ENCODE measurements at regions of chr20 and their contacts with region 1.

Region 1: DNA sequence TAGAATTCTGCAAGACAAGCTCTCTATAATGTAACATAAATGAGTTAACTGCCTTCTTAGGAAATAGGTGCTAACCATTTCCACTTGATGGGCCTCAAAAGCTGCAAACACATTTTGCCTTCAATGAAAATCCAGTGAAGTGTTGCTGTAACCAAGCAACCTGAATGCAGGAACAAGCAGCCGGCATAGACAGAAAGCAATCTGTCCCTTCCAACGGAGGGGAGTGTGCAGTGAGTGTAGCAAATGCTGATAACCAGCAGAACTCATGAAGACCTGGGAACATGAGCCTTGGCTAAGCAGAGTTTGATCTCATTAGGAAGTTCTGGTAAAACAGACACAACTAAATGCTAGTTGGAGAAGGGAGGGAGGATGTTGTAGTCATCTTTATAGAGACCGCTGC is 697.8 kb downstream of the KIF16B start:
- DNase-seq: no peak
- H3K4me3 ChIP-seq: no peak overlapping the region
- CTCF ChIP-seq: no peak
- POLR2A ChIP-seq: no peak

Region 2: DNA sequence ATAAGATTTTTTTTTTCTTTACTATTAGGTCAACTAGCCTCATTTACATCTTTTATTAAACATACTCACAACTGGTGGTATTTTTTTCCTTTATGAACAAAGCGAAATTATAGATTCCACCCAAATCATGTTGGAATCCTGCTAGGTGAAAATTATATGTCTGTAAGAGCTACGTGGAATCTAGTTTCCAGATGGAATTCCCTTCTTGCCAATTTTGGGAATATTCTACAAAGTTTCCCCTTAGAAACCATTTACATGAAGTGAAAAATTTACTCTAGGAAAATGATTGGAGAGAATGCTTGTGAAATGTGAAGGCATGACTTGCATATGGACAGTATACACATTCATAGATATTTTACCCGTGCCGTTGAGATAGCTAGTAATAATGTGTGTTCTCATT is 413.5 kb before region 1 on chr20:
- intact Hi-C with region 1: no loop called
- DNase-seq: no peak
- H3K4me3 ChIP-seq: no peak overlapping the region
- CTCF ChIP-seq: no peak
- POLR2A ChIP-seq: no peak

Region 3: DNA sequence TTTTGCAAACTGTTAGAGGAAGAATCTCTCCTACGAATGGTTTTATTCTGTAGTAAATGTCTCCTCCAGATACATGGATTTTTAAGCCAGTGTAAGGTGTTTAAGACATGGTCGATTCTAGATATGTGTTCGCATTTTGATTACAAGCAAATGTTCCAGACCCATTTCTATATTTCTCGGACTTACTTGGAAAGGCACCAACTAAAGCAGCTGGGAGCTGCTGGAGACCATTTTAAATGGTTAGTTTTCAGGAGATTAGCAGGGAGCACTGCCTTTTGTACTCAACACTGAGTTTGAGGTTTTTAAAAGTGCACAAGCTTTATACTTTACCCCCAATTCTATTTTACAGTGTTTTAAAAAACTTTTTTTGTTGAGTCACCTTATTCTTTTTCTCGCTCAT is 159.2 kb before region 1 on chr20:
- intact Hi-C with region 1: no loop called
- DNase-seq: no peak
- H3K4me3 ChIP-seq: no peak overlapping the region
- CTCF ChIP-seq: no peak
- POLR2A ChIP-seq: no peak

Region 4: DNA sequence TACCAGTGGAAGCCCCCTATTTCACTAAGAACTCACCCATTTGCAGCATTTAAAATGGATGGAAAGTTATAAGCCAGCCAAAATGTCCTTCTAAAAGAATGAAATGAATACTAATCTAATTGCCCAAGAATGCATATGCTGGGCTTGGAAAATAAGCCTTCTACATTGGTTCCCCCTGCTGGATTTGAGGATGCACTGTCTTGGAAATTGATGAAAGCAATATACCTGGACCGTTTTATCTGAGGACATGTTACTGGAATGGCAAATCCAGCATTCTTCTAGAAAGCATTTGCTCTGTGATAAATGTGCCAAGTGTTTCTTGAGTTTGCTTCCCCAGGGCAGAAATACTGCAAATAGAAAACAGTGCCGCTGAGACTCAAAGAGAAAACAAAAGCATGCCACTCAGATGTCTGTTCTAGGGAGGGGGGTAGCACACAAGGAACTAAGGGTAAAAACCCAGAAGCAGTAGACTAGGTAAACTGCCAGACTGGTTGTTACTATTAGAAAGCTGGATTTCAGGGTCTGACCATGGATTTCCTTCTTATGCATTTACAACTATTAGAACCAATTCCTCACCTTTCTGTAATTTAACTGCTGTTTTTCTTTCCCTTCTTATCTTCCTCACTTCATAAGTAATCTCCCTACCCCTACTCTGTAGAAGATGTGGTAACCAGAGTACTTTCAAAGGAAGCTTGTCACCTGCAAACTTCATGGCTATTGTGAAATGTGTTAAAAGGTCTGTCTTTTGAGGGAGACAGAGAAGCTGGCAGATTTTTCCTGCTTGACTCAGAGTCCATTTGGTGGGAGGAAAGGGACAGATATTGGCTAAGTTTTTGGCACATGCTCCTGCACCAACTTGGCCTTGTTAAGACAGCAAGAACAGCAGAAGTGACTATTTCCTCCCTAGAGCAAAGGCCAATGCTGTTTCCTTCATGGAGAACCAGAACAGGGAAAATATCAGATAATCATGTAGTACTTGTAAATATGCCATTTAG is 55.2 kb after region 1 on chr20:
- intact Hi-C with region 1: loop called (anchors 10 kb)
- DNase-seq: peak in 1 of 2 donors; percentile 43
- H3K4me3 ChIP-seq: no peak overlapping the region
- CTCF ChIP-seq: no peak
- POLR2A ChIP-seq: no peak

Measured in lower leg skin (tissue), 4 donors.